GM12878 (cell line): ENCODE measurements at regions of chr17 and their contacts with region 1.

Region 1: GRCh38 chr17:409848-410545 is 57.4 kb upstream of the RPH3AL start:
- DNase-seq: peak; percentile 100
- ATAC-seq: peak; percentile 93
- H3K4me3 ChIP-seq: peak overlapping the region; percentile 71
- H3K27ac ChIP-seq: peak overlapping the region; percentile 65
- H3K4me1 ChIP-seq: peaks cover 16% of the 10 kb centered on the region
- H3K27me3 ChIP-seq: no peaks in the 10 kb centered on the region
- CTCF ChIP-seq: no peak
- EP300 ChIP-seq: no peak
- POLR2A ChIP-seq: peak; percentile 90
- RAD21 ChIP-seq: no peak

Region 2: GRCh38 chr17:376936-377863 is 32.8 kb before region 1 on chr17:
- CTCF ChIA-PET with region 1: no interaction called
- POLR2A ChIA-PET with region 1: no interaction called
- RAD21 ChIA-PET with region 1: no interaction called
- SMC1A ChIA-PET with region 1: no interaction called
- in situ Hi-C with region 1: no loop called
- intact Hi-C with region 1: no loop called
- DNase-seq: no peak
- ATAC-seq: no peak
- H3K4me3 ChIP-seq: no peak overlapping the region
- H3K27ac ChIP-seq: no peak overlapping the region
- H3K4me1 ChIP-seq: no peaks in the 10 kb centered on the region
- H3K27me3 ChIP-seq: no peaks in the 10 kb centered on the region; a peak in 1 of 4 replicates
- CTCF ChIP-seq: no peak
- EP300 ChIP-seq: no peak
- POLR2A ChIP-seq: no peak
- RAD21 ChIP-seq: no peak

Region 3: DNA sequence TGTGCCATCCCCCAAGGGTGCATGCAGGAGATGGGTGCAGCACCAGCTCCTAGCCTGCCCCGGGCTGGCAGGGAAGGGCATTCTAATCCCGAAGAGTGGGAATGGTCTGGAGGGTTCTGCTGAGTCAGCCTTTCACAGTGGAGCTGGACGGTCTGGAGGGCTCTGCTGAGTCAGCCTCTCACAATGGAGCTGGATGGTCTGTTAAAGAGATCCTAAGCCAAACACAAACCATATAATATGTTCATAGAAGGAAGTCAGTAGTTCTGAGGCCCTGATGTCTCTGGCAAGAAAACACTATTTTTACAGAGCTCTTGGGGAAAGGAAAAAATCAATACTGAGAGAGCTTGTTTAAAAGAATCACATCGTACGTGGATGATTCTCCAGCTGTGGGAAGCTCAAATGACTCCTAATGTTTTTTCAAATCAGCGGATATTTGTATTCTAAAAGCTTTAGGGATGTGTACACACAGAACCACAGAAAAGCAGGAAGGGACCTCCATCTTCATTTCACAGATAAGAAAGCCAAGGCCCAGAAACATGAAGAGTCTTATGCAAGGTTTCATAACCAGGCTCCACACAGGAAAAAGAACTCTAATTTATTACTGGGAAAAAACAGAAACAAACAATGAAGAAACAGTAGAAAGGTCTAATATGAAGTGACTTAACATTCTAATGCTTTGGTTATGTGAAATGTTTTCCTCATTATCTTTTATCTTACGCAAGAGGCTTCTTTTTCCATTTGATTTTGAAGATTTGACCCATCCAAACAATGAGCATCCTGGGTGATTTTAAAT is 128.4 kb after region 1 on chr17:
- CTCF ChIA-PET with region 1: interaction called, 15 read pairs
- POLR2A ChIA-PET with region 1: no interaction called
- RAD21 ChIA-PET with region 1: no interaction called
- SMC1A ChIA-PET with region 1: no interaction called
- in situ Hi-C with region 1: no loop called
- intact Hi-C with region 1: no loop called
- DNase-seq: no peak
- ATAC-seq: no peak
- H3K4me3 ChIP-seq: no peak overlapping the region
- H3K27ac ChIP-seq: no peak overlapping the region
- H3K4me1 ChIP-seq: no peaks in the 10 kb centered on the region; the same call in 1 of the 2 replicates
- H3K27me3 ChIP-seq: no peaks in the 10 kb centered on the region
- CTCF ChIP-seq: no peak
- EP300 ChIP-seq: no peak
- POLR2A ChIP-seq: no peak
- RAD21 ChIP-seq: no peak

Region 4: DNA sequence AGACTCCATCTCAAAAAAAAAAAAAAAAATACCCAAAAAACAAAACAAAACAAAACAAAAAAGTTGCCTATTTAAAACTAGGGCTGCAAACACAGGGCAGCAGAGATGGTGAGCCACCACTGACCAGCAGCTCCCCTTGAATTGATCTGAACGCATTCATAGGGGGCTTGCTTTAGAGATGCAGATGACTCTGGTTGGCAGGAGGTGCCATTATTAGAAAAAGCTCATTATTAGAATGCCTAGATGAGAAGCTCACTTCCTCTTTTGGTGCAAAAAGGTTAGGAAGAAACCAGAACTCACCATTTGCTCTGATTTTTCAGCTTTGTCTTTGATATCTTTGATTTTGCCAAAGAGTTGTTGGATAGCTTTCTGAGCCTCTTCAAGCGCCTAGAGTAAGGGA is 251.5 kb after region 1 on chr17:
- CTCF ChIA-PET with region 1: interaction called, 14 read pairs
- POLR2A ChIA-PET with region 1: no interaction called
- RAD21 ChIA-PET with region 1: interaction called, 3 read pairs
- SMC1A ChIA-PET with region 1: interaction called, 4 read pairs
- in situ Hi-C with region 1: no loop called
- intact Hi-C with region 1: no loop called
- DNase-seq: no peak
- ATAC-seq: peak; percentile 28; the same call in 1 of the 3 replicates
- H3K4me3 ChIP-seq: no peak overlapping the region
- H3K27ac ChIP-seq: no peak overlapping the region
- H3K4me1 ChIP-seq: peaks cover 3% of the 10 kb centered on the region; the same call in 1 of the 2 replicates
- H3K27me3 ChIP-seq: no peaks in the 10 kb centered on the region
- CTCF ChIP-seq: no peak
- EP300 ChIP-seq: no peak
- POLR2A ChIP-seq: no peak
- RAD21 ChIP-seq: no peak

Region 5: GRCh38 chr17:700504-701094 is 290.6 kb after region 1 on chr17:
- CTCF ChIA-PET with region 1: interaction called, 210 read pairs
- POLR2A ChIA-PET with region 1: interaction called, 11 read pairs
- RAD21 ChIA-PET with region 1: interaction called, 104 read pairs
- SMC1A ChIA-PET with region 1: interaction called, 99 read pairs
- in situ Hi-C with region 1: loop called (anchors 5 kb)
- intact Hi-C with region 1: loop called (anchors 1 kb)
- DNase-seq: no peak
- ATAC-seq: peak; percentile 52
- H3K4me3 ChIP-seq: no peak overlapping the region
- H3K27ac ChIP-seq: no peak overlapping the region
- H3K4me1 ChIP-seq: no peaks in the 10 kb centered on the region
- H3K27me3 ChIP-seq: no peaks in the 10 kb centered on the region
- CTCF ChIP-seq: peak; percentile 37 to 64 (median 43); a peak in 5 of 6 replicates
- EP300 ChIP-seq: no peak
- POLR2A ChIP-seq: no peak
- RAD21 ChIP-seq: peak; percentile 67

Region 6: GRCh38 chr17:979538-980405 is 569.8 kb after region 1 on chr17 and contains the start of gene NXN:
- CTCF ChIA-PET with region 1: interaction called, 18 read pairs
- POLR2A ChIA-PET with region 1: interaction called, 3 read pairs
- RAD21 ChIA-PET with region 1: interaction called, 13 read pairs
- SMC1A ChIA-PET with region 1: interaction called, 10 read pairs
- in situ Hi-C with region 1: no loop called
- intact Hi-C with region 1: loop called (anchors 1 kb)
- DNase-seq: no peak
- ATAC-seq: peak; percentile 91
- H3K4me3 ChIP-seq: peak within 1 kb of the TSS; percentile 61
- H3K27ac ChIP-seq: no peak within 1 kb of the TSS
- H3K4me1 ChIP-seq: peaks cover 7% of the 10 kb centered on the region; the same call in 1 of the 2 replicates
- H3K27me3 ChIP-seq: peaks cover 3 to 11% of the 10 kb centered on the region in 2 experiments; a peak in 2 of 4 replicates
- CTCF ChIP-seq: no peak; a peak in 1 of 6 replicates
- EP300 ChIP-seq: no peak
- POLR2A ChIP-seq: no peak
- RAD21 ChIP-seq: no peak
- polyA plus RNA-seq, gene NXN: 0.04 to 0.10 TPM